ENCODE measurements at regions of chr7 and their contacts with region 1.

Region 1: DNA sequence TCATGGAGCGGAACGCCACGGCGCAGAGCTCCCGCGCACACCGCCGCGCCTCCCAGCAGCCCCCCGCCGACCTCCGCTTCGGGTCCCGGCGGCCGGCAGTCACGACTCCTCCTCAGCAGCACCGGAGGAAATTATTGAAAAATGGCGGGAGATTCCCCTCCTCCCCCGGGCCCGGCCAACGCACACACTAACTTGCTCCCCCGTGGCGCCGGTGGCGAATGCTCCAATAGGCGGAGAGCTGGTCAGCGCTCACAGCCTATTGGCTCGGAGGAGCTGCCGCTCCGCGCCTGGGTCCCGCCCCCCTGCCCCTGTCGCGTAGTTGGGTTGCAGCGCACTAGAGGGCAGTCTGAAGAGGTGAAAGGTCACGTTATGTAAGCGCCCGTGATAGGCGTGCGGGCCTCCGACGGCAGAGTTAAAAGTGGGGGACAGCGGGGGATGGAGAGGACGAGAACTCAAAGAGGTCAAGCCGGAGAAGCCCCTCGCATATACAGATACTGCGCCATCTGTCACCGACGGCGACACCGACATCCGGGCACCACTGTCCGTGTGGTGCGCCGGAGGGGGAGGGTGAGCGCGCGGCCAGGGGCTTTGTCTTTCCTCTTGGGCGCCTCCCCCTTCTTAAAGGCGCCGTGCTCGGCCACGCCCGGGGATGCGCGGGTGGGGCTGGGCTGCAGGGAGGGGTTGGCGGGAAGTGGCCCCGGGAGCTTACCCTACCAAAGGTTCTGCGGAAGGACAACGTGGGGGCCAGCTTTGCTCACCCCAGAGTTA is at the start of gene BAZ1B:
- DNase-seq: peak; percentile 98
- H3K4me3 Mint-ChIP-seq: peak within 1 kb of the TSS; percentile 91
- H3K27ac Mint-ChIP-seq: peak within 1 kb of the TSS; percentile 91
- H3K4me1 Mint-ChIP-seq: peaks cover 17% of the 10 kb centered on the region
- H3K27me3 Mint-ChIP-seq: no peaks in the 10 kb centered on the region
- CTCF ChIP-seq: peak; percentile 13
- total RNA-seq, gene BAZ1B: 84.0 and 86.7 TPM in 2 replicates

Region 2: DNA sequence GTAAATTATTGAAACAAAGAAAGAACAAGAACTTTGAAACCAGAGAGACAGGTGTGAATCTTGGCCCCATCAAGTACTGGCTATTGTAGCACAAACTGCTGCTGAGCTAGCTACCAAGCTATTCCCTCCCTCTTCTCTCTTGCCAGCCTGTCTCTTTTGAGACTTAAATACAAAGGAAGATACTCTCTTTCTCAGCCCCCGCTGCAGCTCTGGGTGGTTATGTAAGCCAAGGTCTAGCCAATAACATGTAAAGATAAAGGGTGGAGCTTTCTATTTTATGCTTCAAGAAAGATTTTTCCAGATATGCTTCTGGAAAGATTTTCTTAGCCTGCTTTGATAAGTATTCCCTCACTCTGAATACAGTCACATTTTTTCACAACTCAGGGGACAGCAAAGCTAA is 17.4 kb before region 1 on chr7:
- CTCF ChIA-PET with region 1: interaction called, 6 read pairs
- POLR2A ChIA-PET with region 1: interaction called, 11 read pairs
- intact Hi-C with region 1: no loop called
- DNase-seq: no peak
- H3K4me3 Mint-ChIP-seq: no peak overlapping the region
- H3K27ac Mint-ChIP-seq: no peak overlapping the region
- H3K4me1 Mint-ChIP-seq: no peaks in the 10 kb centered on the region
- H3K27me3 Mint-ChIP-seq: no peaks in the 10 kb centered on the region
- CTCF ChIP-seq: no peak

Region 3: DNA sequence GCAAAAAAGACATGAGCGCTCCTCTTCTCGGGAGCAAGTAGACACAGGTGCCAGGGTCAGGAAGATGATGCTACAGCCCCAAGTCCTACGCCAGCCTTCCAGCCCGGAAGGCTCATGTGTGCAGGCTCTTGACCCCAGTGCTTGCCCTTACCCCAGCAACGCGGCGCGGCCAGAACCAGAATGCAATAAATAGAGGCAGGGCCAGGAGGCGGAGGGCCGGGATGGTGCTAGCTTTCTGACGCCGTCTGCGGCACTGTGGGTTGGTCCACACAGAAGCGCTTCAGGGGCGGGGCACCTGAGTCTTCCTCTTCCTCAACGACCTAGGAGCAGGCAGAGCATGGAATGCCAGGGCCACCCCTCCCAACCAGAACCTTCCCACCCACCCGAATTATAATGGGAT is 14.8 kb after region 1 on chr7:
- CTCF ChIA-PET with region 1: interaction called, 3 read pairs
- POLR2A ChIA-PET with region 1: interaction called, 17 read pairs
- intact Hi-C with region 1: no loop called
- DNase-seq: no peak
- H3K4me3 Mint-ChIP-seq: no peak overlapping the region
- H3K27ac Mint-ChIP-seq: no peak overlapping the region
- H3K4me1 Mint-ChIP-seq: no peaks in the 10 kb centered on the region
- H3K27me3 Mint-ChIP-seq: no peaks in the 10 kb centered on the region
- CTCF ChIP-seq: no peak

Region 4: GRCh38 chr7:73557108-73557396 is 34.8 kb after region 1 on chr7:
- CTCF ChIA-PET with region 1: interaction called, 3 read pairs
- POLR2A ChIA-PET with region 1: interaction called, 57 read pairs
- intact Hi-C with region 1: loop called (anchors 1 kb)
- DNase-seq: peak; percentile 91
- H3K4me3 Mint-ChIP-seq: peak overlapping the region; percentile 75
- H3K27ac Mint-ChIP-seq: peak overlapping the region; percentile 95
- H3K4me1 Mint-ChIP-seq: peaks cover 31% of the 10 kb centered on the region
- H3K27me3 Mint-ChIP-seq: no peaks in the 10 kb centered on the region
- CTCF ChIP-seq: no peak

Region 5: GRCh38 chr7:73578342-73579127 is 56.2 kb after region 1 on chr7 and contains the start of gene TBL2:
- CTCF ChIA-PET with region 1: no interaction called
- POLR2A ChIA-PET with region 1: interaction called, 15 read pairs
- intact Hi-C with region 1: no loop called
- DNase-seq: peak; percentile 98
- H3K4me3 Mint-ChIP-seq: peak within 1 kb of the TSS; percentile 87
- H3K27ac Mint-ChIP-seq: peak within 1 kb of the TSS; percentile 93
- H3K4me1 Mint-ChIP-seq: peaks cover 5% of the 10 kb centered on the region
- H3K27me3 Mint-ChIP-seq: no peaks in the 10 kb centered on the region
- CTCF ChIP-seq: no peak
- total RNA-seq, gene TBL2: 44.0 and 47.0 TPM in 2 replicates